Activated CD8-positive, alpha-beta memory T cell treated with anti-CD3 and anti-CD28 coated beads, Interleukin-2, amount 10 ng/mL, durations not matched to agents 7 days and 5 days (primary cell): ENCODE measurements at regions of chr2 and their contacts with region 1.

Region 1: DNA sequence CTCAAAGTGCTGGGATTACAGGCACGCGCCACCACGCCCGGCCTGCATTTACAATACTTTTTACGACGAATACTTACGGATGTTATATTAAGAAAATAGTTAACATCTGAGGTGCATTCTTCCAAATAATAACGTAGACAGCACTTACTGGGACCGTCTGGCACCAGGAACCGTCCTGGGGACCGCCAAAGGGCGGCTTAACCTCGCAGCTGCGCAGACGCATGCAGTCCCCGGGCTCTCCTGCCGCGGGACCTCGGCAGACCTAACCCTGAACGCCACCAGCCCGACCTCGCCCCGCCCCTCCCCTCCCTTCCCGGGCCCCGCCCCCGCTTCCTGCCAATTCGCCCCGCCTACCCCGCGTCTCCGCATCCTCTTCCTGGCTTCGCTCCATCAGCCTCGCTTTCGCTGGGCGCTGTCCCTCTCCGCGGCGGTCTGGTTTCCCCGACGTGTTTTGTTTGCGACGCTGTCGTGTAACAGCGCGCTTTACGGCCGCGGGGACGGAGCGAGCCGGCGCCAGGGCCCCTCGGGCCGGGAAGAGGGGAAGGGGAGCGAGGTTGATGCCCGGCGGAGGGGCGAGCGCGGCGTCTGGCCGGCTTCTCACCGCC is at the start of gene CNOT11:
- DNase-seq: peak; percentile 99
- ATAC-seq: peak; percentile 87
- H3K4me3 Mint-ChIP-seq: peak within 1 kb of the TSS; percentile 91
- H3K27ac Mint-ChIP-seq: peak within 1 kb of the TSS; percentile 97
- H3K4me1 Mint-ChIP-seq: peaks cover 43% of the 10 kb centered on the region
- H3K27me3 Mint-ChIP-seq: no peaks in the 10 kb centered on the region
- total RNA-seq, gene CNOT11: 57.4 to 71.9 TPM

Region 2: DNA sequence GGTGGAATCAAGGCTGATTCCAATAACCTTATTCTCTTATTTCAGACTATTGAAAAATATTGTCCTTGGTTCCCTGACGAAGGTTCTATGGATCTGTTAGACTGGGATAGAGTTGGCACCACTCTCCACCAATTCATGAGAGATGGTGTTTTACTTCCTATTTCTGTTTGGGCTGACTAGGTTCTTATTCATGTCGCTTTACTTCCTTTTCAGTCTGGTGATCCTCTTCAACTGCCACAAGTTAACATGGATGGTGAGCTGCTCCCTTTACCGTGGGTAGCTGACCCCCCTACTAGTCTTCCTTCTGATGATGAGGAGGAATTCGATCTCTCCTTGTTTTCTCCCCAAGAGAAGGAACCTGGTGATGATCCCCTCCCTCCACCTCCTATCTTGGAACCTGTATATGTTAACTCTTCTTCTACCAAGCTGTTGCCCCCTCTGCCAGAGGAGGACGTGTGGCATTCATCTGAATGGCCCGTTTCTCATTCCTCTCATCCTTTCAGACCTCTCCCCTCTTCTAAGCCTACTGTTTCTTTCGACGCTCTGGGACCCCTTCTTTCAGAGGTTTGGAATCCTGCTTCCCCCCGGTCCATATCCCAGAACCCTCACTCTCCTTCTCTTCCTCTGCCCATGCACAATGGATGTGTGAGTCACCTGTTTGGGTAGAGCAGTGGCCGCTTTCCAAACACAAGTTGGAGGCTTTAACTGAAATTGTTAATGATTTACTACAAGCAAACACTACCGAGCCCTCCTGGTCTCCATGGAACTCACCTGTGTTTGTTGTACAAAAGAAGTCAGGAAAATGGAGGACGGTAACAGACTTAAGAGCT is 13.4 kb before region 1 on chr2:
- CTCF ChIA-PET with region 1: interaction called, 25 read pairs
- DNase-seq: no peak
- ATAC-seq: no peak
- H3K4me3 Mint-ChIP-seq: no peak overlapping the region
- H3K27ac Mint-ChIP-seq: no peak overlapping the region
- H3K4me1 Mint-ChIP-seq: peaks cover 5% of the 10 kb centered on the region
- H3K27me3 Mint-ChIP-seq: no peaks in the 10 kb centered on the region

Region 3: GRCh38 chr2:101272045-101272784 is 19.7 kb after region 1 on chr2:
- CTCF ChIA-PET with region 1: interaction called, 28 read pairs
- DNase-seq: no peak
- ATAC-seq: peak; percentile 94
- H3K4me3 Mint-ChIP-seq: peak overlapping the region; percentile 15
- H3K27ac Mint-ChIP-seq: peak overlapping the region; percentile 82
- H3K4me1 Mint-ChIP-seq: peaks cover 60% of the 10 kb centered on the region
- H3K27me3 Mint-ChIP-seq: no peaks in the 10 kb centered on the region

Region 4: GRCh38 chr2:101361121-101361870 is 108.8 kb after region 1 on chr2:
- CTCF ChIA-PET with region 1: interaction called, 16 read pairs
- DNase-seq: peak; percentile 82
- ATAC-seq: peak; percentile 92
- H3K4me3 Mint-ChIP-seq: peak overlapping the region; percentile 3
- H3K27ac Mint-ChIP-seq: peak overlapping the region; percentile 69
- H3K4me1 Mint-ChIP-seq: peaks cover 28% of the 10 kb centered on the region
- H3K27me3 Mint-ChIP-seq: no peaks in the 10 kb centered on the region